Activated CD4-positive, alpha-beta memory T cell treated with anti-CD3 and anti-CD28 coated beads for 36 hours (primary cell): ENCODE measurements at regions of chr6 and their contacts with region 1.

Region 1: DNA sequence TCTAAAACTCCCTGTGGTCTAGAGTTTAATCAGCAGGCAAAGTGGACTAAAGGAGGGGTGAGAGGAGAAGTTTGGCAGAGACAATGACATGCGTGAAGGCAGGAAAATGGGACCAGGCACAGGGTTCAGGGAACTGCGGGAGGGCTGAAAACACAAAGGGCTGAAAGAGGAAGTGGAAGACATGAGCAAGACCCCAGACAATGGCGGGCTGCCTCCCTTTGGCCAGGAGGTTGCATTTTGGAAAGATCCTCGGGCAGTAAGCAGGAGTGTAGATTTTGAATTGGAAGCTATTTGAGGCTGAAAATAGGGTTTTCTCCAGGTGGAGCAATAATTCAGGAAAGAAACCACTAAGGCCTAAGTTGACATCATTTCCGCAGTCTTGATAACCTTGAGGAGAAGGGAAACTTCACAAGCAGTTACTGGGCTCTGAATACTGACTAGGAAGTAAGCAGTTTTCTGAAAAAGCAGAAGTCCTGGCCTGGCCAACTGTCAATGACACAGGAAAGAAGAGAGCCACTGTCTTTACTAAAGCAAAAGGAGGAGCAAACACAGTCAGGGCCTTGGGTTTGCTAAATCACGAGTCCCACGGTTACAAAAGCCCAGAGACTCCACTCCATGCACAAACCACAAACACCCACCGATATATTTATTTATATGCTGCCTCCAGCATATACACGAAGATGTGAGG is 3.4 kb downstream of the LY86 start:
- DNase-seq: no peak
- H3K4me3 Mint-ChIP-seq: no peak overlapping the region
- H3K27ac Mint-ChIP-seq: peak overlapping the region; percentile 39
- H3K4me1 Mint-ChIP-seq: peaks cover 57% of the 10 kb centered on the region
- H3K27me3 Mint-ChIP-seq: no peaks in the 10 kb centered on the region

Region 2: GRCh38 chr6:6351511-6352025 is 240.4 kb before region 1 on chr6:
- CTCF ChIA-PET with region 1: no interaction called
- POLR2A ChIA-PET with region 1: no interaction called
- intact Hi-C with region 1: no loop called
- DNase-seq: no peak
- H3K4me3 Mint-ChIP-seq: no peak overlapping the region
- H3K27ac Mint-ChIP-seq: no peak overlapping the region
- H3K4me1 Mint-ChIP-seq: no peaks in the 10 kb centered on the region
- H3K27me3 Mint-ChIP-seq: peaks cover 13% of the 10 kb centered on the region

Region 3: DNA sequence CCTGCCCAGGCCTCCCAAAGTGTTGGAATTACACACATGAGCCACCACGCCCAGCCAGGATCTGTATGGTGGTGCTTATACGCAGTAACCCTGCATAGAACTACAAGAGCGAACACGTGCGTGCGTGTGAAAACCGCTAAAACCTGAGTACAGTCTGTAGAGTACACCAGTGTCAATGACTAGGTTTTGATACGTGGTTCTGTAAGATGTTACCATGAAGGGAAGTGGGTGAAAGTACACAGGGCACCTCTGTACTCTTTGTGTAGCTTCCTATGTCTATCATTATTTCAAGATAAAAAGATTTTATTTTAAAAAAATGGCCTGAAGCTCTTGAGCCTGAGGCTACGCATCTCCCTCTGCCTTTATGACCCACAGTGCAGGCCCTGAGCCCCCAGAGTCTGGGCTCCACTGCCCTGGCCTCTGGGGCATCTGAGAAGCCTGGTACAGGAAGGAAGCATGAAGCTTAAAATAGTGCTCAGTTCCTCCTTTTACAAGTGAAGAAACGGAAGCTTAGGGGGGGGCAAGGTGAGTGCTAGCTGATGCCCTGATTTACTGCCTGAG is 18.2 kb after region 1 on chr6:
- CTCF ChIA-PET with region 1: no interaction called
- POLR2A ChIA-PET with region 1: no interaction called
- intact Hi-C with region 1: loop called (anchors 2 kb)
- DNase-seq: peak; percentile 59
- H3K4me3 Mint-ChIP-seq: no peak overlapping the region
- H3K27ac Mint-ChIP-seq: peak overlapping the region; percentile 60
- H3K4me1 Mint-ChIP-seq: peaks cover 53% of the 10 kb centered on the region
- H3K27me3 Mint-ChIP-seq: no peaks in the 10 kb centered on the region